GM12878 (cell line): ENCODE measurements at regions of chr4 and their contacts with region 1.

Region 1: GRCh38 chr4:27318743-27319142 is 458.1 kb downstream of the STIM2 start:
- DNase-seq: peak; percentile 2
- ATAC-seq: peak; percentile 76
- H3K4me3 ChIP-seq: no peak overlapping the region
- H3K27ac ChIP-seq: no peak overlapping the region
- H3K4me1 ChIP-seq: no peaks in the 10 kb centered on the region
- H3K27me3 ChIP-seq: no peaks in the 10 kb centered on the region
- CTCF ChIP-seq: peak; percentile 46 to 48 (median 46); a peak in 5 of 6 replicates
- EP300 ChIP-seq: no peak
- POLR2A ChIP-seq: no peak
- RAD21 ChIP-seq: peak; percentile 52

Region 2: GRCh38 chr4:27048429-27049238 is 270.1 kb before region 1 on chr4:
- CTCF ChIA-PET with region 1: interaction called, 33 read pairs
- POLR2A ChIA-PET with region 1: no interaction called
- RAD21 ChIA-PET with region 1: interaction called, 22 read pairs
- SMC1A ChIA-PET with region 1: interaction called, 20 read pairs
- in situ Hi-C with region 1: loop called (anchors 5 kb)
- intact Hi-C with region 1: loop called (anchors 1 kb)
- DNase-seq: no peak
- ATAC-seq: peak; percentile 67
- H3K4me3 ChIP-seq: no peak overlapping the region
- H3K27ac ChIP-seq: no peak overlapping the region
- H3K4me1 ChIP-seq: no peaks in the 10 kb centered on the region
- H3K27me3 ChIP-seq: peaks cover 0 to 2% of the 10 kb centered on the region in 2 experiments; a peak in 3 of 4 replicates
- CTCF ChIP-seq: peak; percentile 52 to 69 (median 56)
- EP300 ChIP-seq: no peak
- POLR2A ChIP-seq: no peak
- RAD21 ChIP-seq: peak; percentile 72

Region 3: GRCh38 chr4:27096142-27096824 is 222.5 kb before region 1 on chr4:
- CTCF ChIA-PET with region 1: interaction called, 3 read pairs
- POLR2A ChIA-PET with region 1: no interaction called
- RAD21 ChIA-PET with region 1: no interaction called
- SMC1A ChIA-PET with region 1: interaction called, 4 read pairs
- in situ Hi-C with region 1: no loop called
- intact Hi-C with region 1: loop called (anchors 2 kb)
- DNase-seq: no peak
- ATAC-seq: no peak
- H3K4me3 ChIP-seq: no peak overlapping the region
- H3K27ac ChIP-seq: no peak overlapping the region
- H3K4me1 ChIP-seq: no peaks in the 10 kb centered on the region
- H3K27me3 ChIP-seq: peaks cover 0 to 4% of the 10 kb centered on the region in 2 experiments; a peak in 3 of 4 replicates
- CTCF ChIP-seq: no peak; a peak in 1 of 6 replicates
- EP300 ChIP-seq: no peak
- POLR2A ChIP-seq: no peak
- RAD21 ChIP-seq: no peak

Region 4: GRCh38 chr4:27176400-27176799 is 142.3 kb before region 1 on chr4:
- CTCF ChIA-PET with region 1: no interaction called
- POLR2A ChIA-PET with region 1: no interaction called
- RAD21 ChIA-PET with region 1: no interaction called
- SMC1A ChIA-PET with region 1: interaction called, 4 read pairs
- in situ Hi-C with region 1: no loop called
- intact Hi-C with region 1: loop called (anchors 5 kb)
- DNase-seq: no peak
- ATAC-seq: peak; percentile 57; the same call in 2 of the 3 replicates
- H3K4me3 ChIP-seq: no peak overlapping the region
- H3K27ac ChIP-seq: no peak overlapping the region
- H3K4me1 ChIP-seq: no peaks in the 10 kb centered on the region
- H3K27me3 ChIP-seq: no peaks in the 10 kb centered on the region
- CTCF ChIP-seq: peak in 2 of 3 experiments; percentile 22 to 36; a peak in 3 of 6 replicates
- EP300 ChIP-seq: no peak
- POLR2A ChIP-seq: no peak
- RAD21 ChIP-seq: 0 out of 2 replicates have a peak, but pooled peaks have one; percentile 32

Region 5: GRCh38 chr4:27407616-27408015 is 88.9 kb after region 1 on chr4:
- CTCF ChIA-PET with region 1: no interaction called
- POLR2A ChIA-PET with region 1: no interaction called
- RAD21 ChIA-PET with region 1: no interaction called
- SMC1A ChIA-PET with region 1: no interaction called
- in situ Hi-C with region 1: no loop called
- intact Hi-C with region 1: no loop called
- DNase-seq: no peak
- ATAC-seq: no peak
- H3K4me3 ChIP-seq: no peak overlapping the region
- H3K27ac ChIP-seq: no peak overlapping the region
- H3K4me1 ChIP-seq: no peaks in the 10 kb centered on the region
- H3K27me3 ChIP-seq: no peaks in the 10 kb centered on the region
- CTCF ChIP-seq: no peak
- EP300 ChIP-seq: no peak
- POLR2A ChIP-seq: no peak
- RAD21 ChIP-seq: no peak

Region 6: DNA sequence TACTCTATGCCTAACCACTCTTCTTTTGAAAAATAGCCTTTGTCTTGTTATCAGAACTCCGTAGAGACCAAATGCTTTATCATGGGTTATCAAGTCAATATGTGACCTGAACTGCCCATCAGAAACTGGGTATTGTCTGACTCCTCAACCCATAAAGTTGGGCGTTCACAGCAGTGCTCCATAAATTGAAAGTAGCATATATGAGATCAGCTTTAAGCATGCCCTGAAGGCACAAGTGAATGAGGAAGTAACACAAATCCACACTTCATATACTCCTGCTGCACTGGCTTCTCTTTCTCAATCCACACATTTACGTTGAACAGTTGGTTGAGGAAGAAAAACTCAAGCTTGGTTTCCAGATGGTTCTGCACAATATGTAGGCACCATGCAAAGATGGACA is 647.9 kb after region 1 on chr4:
- CTCF ChIA-PET with region 1: no interaction called
- POLR2A ChIA-PET with region 1: no interaction called
- RAD21 ChIA-PET with region 1: no interaction called
- SMC1A ChIA-PET with region 1: no interaction called
- in situ Hi-C with region 1: no loop called
- intact Hi-C with region 1: no loop called
- DNase-seq: no peak
- ATAC-seq: no peak
- H3K4me3 ChIP-seq: no peak overlapping the region
- H3K27ac ChIP-seq: no peak overlapping the region
- H3K4me1 ChIP-seq: no peaks in the 10 kb centered on the region
- H3K27me3 ChIP-seq: no peaks in the 10 kb centered on the region
- CTCF ChIP-seq: no peak
- EP300 ChIP-seq: no peak
- POLR2A ChIP-seq: no peak
- RAD21 ChIP-seq: no peak